ENCODE measurements at regions of chr6 and their contacts with region 1.

Region 1: GRCh38 chr6:25889877-25890853 is 16.1 kb upstream of the SLC17A3 start:
- DNase-seq: peak; percentile 73
- H3K4me3 ChIP-seq: no peak overlapping the region
- H3K27ac ChIP-seq: no peak overlapping the region
- H3K4me1 ChIP-seq: no peaks in the 10 kb centered on the region
- H3K27me3 ChIP-seq: peaks cover 0 to 1% of the 10 kb centered on the region in 2 experiments
- CTCF ChIP-seq: peak; percentile 16 to 17
- POLR2A ChIP-seq: no peak

Region 2: DNA sequence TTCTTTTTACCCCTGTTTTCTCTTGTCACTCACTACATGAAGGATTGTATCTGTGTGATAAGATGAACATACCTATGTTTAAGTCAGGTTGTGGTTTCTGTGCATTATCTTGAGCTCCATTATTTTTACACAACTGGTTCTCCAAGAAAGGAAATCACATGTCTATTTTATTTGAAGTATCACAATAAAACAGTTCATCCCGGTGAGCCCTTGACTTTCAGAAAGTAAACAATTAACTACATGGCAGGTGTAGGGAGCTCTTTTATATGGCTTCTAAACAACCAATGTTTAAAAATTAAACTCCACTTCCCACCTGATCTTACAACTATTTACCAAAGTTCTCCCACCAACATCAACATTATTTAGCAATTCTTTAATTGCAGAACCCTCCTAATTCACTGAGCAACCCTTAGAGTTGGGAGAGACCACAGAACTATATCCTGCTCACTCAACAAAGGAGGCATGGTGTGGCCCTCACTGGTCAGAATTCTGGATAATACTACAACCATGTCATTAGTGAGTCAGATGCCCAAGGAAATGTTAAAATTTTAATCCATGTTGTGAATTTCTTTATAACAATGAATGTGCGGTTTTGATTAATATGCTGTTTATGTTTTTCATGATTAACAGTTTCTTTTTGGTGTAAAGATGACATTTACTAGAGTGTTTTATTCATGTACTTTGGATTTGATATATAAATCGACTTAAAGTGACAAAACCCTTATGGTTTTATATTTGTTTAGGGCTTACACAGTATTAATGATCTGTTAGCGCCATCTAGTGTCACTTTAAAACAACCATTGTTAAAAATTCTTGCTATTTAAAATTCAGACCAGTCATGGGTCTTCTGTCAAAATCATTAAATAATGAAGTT is 288.1 kb before region 1 on chr6:
- CTCF ChIA-PET with region 1: interaction called, 3 read pairs
- POLR2A ChIA-PET with region 1: no interaction called
- dilution Hi-C with region 1: no loop called
- intact Hi-C with region 1: loop called (anchors 2 kb)
- DNase-seq: peak; percentile 62
- H3K4me3 ChIP-seq: no peak overlapping the region
- H3K27ac ChIP-seq: no peak overlapping the region
- H3K4me1 ChIP-seq: no peaks in the 10 kb centered on the region
- H3K27me3 ChIP-seq: peaks cover 0 to 2% of the 10 kb centered on the region in 2 experiments
- CTCF ChIP-seq: peak; percentile 10 to 19
- POLR2A ChIP-seq: no peak

Region 3: DNA sequence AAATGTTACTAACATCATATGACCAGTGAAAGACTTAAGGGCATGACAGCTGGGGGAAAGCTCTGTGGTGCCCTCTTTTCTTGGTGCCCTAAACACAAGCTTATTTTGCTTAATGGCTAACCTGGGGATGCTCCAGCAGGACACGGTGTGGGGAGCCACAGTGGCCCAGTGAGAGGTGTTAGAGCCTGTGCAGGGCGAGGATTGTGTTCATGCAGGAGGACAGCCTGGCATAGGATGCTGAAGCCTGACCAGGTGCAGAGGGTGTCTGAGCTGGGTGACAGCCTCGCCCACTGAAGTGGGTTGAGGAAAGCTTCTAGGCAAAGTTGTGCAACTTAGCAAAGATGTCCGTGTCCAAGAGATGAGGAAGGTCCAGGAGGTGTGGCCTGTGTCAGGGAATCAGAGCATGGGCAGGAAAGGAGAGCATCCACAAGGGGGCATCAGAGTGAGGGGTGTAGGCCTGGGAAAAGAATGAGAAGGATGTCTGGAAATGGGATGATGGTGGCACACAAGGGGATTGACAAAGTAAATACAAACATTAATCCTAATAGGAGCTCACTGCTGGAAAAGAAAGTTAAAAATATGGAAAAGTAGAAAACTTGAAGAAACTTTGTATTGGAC is 101.8 kb before region 1 on chr6:
- CTCF ChIA-PET with region 1: interaction called, 83 read pairs
- POLR2A ChIA-PET with region 1: no interaction called
- dilution Hi-C with region 1: no loop called
- intact Hi-C with region 1: loop called (anchors 1 kb)
- DNase-seq: peak; percentile 69
- H3K4me3 ChIP-seq: no peak overlapping the region
- H3K27ac ChIP-seq: no peak overlapping the region
- H3K4me1 ChIP-seq: no peaks in the 10 kb centered on the region
- H3K27me3 ChIP-seq: no peaks in the 10 kb centered on the region
- CTCF ChIP-seq: peak; percentile 63 to 64
- POLR2A ChIP-seq: no peak

Region 4: DNA sequence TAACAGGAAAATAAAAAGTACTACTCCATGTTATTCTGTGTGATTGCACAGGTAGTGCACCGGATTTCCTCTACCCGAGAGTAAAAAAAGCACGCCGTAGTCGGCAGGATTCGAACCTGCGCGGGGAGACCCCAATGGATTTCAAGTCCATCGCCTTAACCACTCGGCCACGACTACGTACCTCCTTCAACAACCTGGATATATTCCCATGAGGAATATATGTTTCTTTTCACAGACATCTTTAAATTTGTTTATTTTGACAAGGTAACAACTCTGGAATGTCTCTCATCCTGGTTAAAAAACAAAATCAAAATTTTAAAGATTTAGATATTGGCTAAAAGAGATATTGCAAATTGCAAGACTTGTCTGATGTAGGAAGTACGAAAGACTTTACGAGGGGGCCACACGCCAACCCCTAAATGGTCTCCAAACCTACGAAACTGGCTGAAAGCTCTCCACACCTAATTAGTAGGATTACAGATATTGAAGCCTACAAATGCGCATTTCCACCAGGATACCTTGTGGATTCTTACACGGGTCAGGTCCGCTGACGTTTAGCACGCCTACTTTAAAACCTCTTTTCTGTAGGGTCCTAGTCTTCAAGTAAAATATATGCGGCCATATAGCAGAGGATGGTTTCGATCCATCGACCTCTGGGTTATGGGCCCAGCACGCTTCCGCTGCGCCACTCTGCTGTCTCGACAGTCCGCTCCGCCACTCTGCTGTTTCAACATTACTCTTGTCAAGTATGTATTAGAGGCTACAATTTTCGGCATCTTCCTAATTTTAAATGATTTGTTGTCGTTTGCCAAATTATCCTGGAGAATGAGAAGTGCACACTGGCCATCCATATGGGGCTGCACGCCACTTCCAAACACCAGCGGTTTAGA is 422.6 kb after region 1 on chr6:
- CTCF ChIA-PET with region 1: no interaction called
- POLR2A ChIA-PET with region 1: no interaction called
- dilution Hi-C with region 1: no loop called
- intact Hi-C with region 1: no loop called
- DNase-seq: peak; percentile 83
- H3K4me3 ChIP-seq: peak overlapping the region; percentile 39 to 98 (median 95)
- H3K27ac ChIP-seq: peak overlapping the region; percentile 38
- H3K4me1 ChIP-seq: peaks cover 12% of the 10 kb centered on the region
- H3K27me3 ChIP-seq: peaks cover 4 to 9% of the 10 kb centered on the region in 2 experiments
- CTCF ChIP-seq: no peak
- POLR2A ChIP-seq: no peak

Measured in endothelial cell of umbilical vein (primary cell).